CD14-positive monocyte (primary cell): ENCODE measurements at regions of chr17 and their contacts with region 1.

Region 1: GRCh38 chr17:75345514-75346167 is 56.4 kb upstream of the SLC25A19 start:
- DNase-seq: peak; percentile 47 to 71 (median 55)
- H3K4me3 ChIP-seq: peak overlapping the region in 2 of 3 experiments; percentile 33 to 57
- H3K4me3 Mint-ChIP-seq: peak overlapping the region; percentile 13 to 78
- H3K27ac ChIP-seq: peak overlapping the region; percentile 49 to 87
- H3K27ac Mint-ChIP-seq: peak overlapping the region; percentile 85 to 94 (median 91)
- H3K4me1 ChIP-seq: peaks cover 87 to 97% of the 10 kb centered on the region in 2 donors
- H3K4me1 Mint-ChIP-seq: peaks cover 98% of the 10 kb centered on the region
- H3K27me3 ChIP-seq: no peaks in the 10 kb centered on the region
- H3K27me3 Mint-ChIP-seq: peaks cover 0 to 2% (median 0%) of the 10 kb centered on the region in 3 donors
- CTCF ChIP-seq: no peak

Region 2: GRCh38 chr17:75380315-75380714 is 34.7 kb after region 1 on chr17:
- intact Hi-C with region 1: loop called in 1 of 2 experiments (anchors 5 kb)
- DNase-seq: no peak
- H3K4me3 ChIP-seq: no peak overlapping the region
- H3K4me3 Mint-ChIP-seq: no peak overlapping the region
- H3K27ac ChIP-seq: peak overlapping the region in 1 of 2 donors; percentile 3
- H3K27ac Mint-ChIP-seq: peak overlapping the region in 2 of 7 donors; percentile 14 to 57
- H3K4me1 ChIP-seq: peaks cover 2 to 8% of the 10 kb centered on the region in 2 donors
- H3K4me1 Mint-ChIP-seq: peaks cover 25% of the 10 kb centered on the region
- H3K27me3 ChIP-seq: no peaks in the 10 kb centered on the region
- H3K27me3 Mint-ChIP-seq: no peaks in the 10 kb centered on the region
- CTCF ChIP-seq: no peak

Region 3: DNA sequence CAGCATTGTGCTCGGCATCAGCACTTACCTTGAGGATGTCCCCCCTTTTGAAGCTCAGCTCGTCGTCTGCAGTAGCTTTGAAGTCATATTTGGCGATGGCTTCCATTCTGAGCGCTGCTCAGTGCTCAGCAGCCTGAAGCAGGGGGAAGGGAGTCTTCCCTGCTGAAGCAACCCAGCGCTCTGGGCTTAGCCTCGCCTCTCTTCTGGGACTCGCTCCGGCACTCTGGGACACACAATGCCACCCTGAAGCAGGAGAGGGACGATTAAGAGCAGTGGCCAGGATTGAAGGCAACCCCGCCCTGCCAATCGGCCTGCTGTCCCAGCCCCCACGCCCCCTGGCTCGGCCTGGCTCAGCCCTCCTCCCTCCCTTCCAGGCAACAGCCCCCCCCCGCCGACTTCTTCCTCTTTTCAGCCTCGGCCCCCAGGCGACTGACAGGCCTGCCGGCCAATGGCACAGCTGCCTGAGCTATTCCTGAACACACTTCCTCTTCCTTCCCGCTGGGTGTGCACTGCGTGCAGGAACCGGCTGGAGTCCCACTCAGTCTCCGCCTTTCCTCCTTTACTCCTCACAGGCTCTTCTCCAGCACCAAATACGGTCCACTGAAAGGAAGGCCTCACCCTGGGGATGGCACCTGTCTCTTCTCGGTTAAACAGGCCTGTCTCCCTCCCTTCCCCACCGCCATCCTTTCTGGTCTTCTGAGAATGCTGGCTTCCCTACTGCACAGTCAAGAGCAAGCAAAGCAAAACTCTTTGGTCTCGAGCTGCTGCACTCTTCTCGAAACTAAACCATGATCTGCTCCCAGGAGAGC is 48.1 kb after region 1 on chr17:
- intact Hi-C with region 1: loop called in 1 of 2 experiments (anchors 10 kb)
- DNase-seq: peak; percentile 94 to 96 (median 95)
- H3K4me3 ChIP-seq: peak overlapping the region; percentile 28 to 71 (median 42)
- H3K4me3 Mint-ChIP-seq: peak overlapping the region; percentile 80 to 90
- H3K27ac ChIP-seq: peak overlapping the region; percentile 65 to 71
- H3K27ac Mint-ChIP-seq: peak overlapping the region; percentile 85 to 95 (median 93)
- H3K4me1 ChIP-seq: peaks cover 50 to 68% of the 10 kb centered on the region in 2 donors
- H3K4me1 Mint-ChIP-seq: peaks cover 73% of the 10 kb centered on the region
- H3K27me3 ChIP-seq: no peaks in the 10 kb centered on the region
- H3K27me3 Mint-ChIP-seq: no peaks in the 10 kb centered on the region
- CTCF ChIP-seq: peak; percentile 15

Region 4: GRCh38 chr17:75412455-75413317 is 67.0 kb after region 1 on chr17:
- intact Hi-C with region 1: no loop called
- DNase-seq: peak; percentile 57 to 74 (median 59)
- H3K4me3 ChIP-seq: peak overlapping the region in 1 of 3 experiments; percentile 57
- H3K4me3 Mint-ChIP-seq: peak overlapping the region; percentile 41 to 76
- H3K27ac ChIP-seq: no peak overlapping the region
- H3K27ac Mint-ChIP-seq: peak overlapping the region in 2 of 7 donors; percentile 25 to 37
- H3K4me1 ChIP-seq: peaks cover 6 to 12% of the 10 kb centered on the region in 2 donors
- H3K4me1 Mint-ChIP-seq: peaks cover 27% of the 10 kb centered on the region
- H3K27me3 ChIP-seq: no peaks in the 10 kb centered on the region
- H3K27me3 Mint-ChIP-seq: no peaks in the 10 kb centered on the region
- CTCF ChIP-seq: peak; percentile 80